PC-9 (cell line): ENCODE measurements at regions of chr12 and their contacts with region 1.

Region 1: DNA sequence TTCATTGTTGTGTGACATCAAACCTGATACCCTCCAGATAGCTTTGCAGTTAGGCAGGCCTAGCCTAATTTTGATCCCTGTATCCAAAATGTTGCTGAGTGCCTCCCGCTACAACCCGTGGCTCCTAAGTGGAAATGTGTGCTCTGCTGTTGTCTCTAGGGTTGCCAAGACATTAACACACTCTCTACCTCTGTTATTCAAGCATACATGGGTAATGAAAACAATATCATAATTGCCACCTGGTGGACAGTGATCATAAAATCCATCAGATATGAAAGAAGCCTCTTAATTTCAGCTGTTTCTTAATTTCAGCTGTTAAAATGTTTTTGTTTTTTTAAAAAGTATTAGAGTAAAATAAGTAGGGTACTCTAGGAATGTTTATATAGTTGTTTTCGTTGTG is 93.5 kb downstream of the PLEKHA5 start:
- DNase-seq: no peak
- H3K4me3 ChIP-seq: no peak overlapping the region
- H3K27ac ChIP-seq: no peak overlapping the region
- H3K4me1 ChIP-seq: no peaks in the 10 kb centered on the region
- H3K27me3 ChIP-seq: no peaks in the 10 kb centered on the region
- CTCF ChIP-seq: 0 out of 2 replicates have a peak, but pooled peaks have one; percentile 45

Region 2: GRCh38 chr12:18676996-18677588 is 545.9 kb before region 1 on chr12:
- CTCF ChIA-PET with region 1: interaction called, 18 read pairs
- POLR2A ChIA-PET with region 1: no interaction called
- intact Hi-C with region 1: no loop called
- DNase-seq: no peak
- H3K4me3 ChIP-seq: no peak overlapping the region
- H3K27ac ChIP-seq: no peak overlapping the region
- H3K4me1 ChIP-seq: no peaks in the 10 kb centered on the region
- H3K27me3 ChIP-seq: no peaks in the 10 kb centered on the region
- CTCF ChIP-seq: no peak

Region 3: GRCh38 chr12:19277707-19278106 is 54.7 kb after region 1 on chr12:
- CTCF ChIA-PET with region 1: no interaction called
- POLR2A ChIA-PET with region 1: no interaction called
- intact Hi-C with region 1: no loop called
- DNase-seq: no peak
- H3K4me3 ChIP-seq: no peak overlapping the region
- H3K27ac ChIP-seq: no peak overlapping the region
- H3K4me1 ChIP-seq: peaks cover 20% of the 10 kb centered on the region
- H3K27me3 ChIP-seq: no peaks in the 10 kb centered on the region
- CTCF ChIP-seq: no peak

Region 4: DNA sequence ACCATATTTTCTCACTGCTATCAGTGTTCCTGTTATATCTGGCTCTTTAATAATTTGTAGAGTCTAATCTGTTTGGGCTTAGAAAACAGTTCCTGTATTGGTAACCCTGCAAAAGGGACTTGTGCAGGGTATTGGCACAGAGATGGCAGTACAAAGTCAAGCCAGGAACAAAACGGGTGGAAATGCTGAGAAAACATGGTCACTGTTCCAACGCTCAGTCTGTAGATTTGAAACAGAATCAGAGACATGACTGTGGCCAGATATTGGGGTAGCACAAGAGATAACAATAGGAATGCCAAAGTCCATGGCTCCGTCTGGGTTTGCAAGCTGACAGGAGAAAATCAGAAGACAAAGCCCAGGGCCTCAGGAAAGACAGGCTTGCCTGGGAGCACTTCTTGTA is 854.6 kb after region 1 on chr12:
- CTCF ChIA-PET with region 1: no interaction called
- POLR2A ChIA-PET with region 1: interaction called, 17 read pairs
- intact Hi-C with region 1: no loop called
- DNase-seq: no peak
- H3K4me3 ChIP-seq: no peak overlapping the region
- H3K27ac ChIP-seq: no peak overlapping the region
- H3K4me1 ChIP-seq: no peaks in the 10 kb centered on the region
- H3K27me3 ChIP-seq: no peaks in the 10 kb centered on the region
- CTCF ChIP-seq: no peak